Heart right ventricle (tissue), 16 donors: ENCODE measurements at regions of chr19 and their contacts with region 1.

Region 1: DNA sequence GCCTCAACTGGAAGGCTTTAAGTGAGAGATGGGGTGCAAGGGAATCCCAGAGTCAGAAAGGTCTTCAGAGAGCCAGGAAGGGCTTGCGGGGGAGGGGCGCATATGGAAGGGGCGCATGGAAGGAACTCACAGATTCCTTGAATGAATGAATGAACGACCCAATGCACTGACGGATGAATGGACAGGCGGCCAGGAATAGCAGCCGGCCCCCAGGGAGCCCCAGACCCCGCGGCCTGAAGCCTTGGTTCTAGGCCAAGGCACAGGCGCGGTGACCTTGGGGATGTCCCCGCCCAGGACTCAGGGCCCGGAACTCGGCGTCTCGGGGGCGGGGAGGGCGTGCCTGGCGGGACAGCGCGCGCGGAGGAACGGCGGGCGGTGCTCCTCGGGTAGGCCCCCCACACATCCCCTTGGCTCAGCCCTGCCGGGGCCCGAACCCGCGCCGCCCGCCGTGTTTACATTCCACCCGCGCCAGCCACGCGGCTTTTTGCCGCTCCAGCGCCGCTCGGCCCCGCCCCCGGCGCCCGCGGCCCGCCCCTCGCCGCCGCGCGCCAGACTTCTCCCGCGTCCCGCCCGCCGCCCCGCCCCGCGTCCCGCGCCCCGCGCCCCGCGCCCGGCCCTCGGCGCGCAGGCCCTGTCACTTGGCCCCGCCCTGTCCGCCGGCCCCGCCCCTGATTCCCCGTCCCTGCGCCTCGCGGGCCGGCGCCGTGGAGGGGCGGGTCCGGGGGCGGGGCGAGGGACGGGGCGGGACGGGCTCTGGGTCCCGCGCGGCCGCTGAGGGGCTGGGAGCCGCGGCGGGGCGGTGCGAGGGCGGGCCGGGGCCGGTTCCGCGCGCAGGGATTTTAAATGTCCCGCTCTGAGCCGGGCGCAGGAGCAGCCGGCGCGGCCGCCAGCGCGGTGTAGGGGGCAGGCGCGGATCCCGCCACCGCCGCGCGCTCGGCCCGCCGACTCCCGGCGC is at the start of gene CCNE1:
- DNase-seq: peak; percentile 95 to 97
- ATAC-seq: peak; percentile 96 to 99 (median 98)
- H3K4me3 ChIP-seq: peak within 1 kb of the TSS; percentile 35 to 66 (median 58)
- H3K27ac ChIP-seq: peak within 1 kb of the TSS in 8 of 10 donors; percentile 35 to 77 (median 75)
- H3K4me1 ChIP-seq: peaks cover 0 to 15% (median 8%) of the 10 kb centered on the region in 9 donors
- H3K27me3 ChIP-seq: no peaks in the 10 kb centered on the region
- CTCF ChIP-seq: no peak
- total RNA-seq, gene CCNE1: 1.4 to 4.0 (median 2.7) TPM

Region 2: DNA sequence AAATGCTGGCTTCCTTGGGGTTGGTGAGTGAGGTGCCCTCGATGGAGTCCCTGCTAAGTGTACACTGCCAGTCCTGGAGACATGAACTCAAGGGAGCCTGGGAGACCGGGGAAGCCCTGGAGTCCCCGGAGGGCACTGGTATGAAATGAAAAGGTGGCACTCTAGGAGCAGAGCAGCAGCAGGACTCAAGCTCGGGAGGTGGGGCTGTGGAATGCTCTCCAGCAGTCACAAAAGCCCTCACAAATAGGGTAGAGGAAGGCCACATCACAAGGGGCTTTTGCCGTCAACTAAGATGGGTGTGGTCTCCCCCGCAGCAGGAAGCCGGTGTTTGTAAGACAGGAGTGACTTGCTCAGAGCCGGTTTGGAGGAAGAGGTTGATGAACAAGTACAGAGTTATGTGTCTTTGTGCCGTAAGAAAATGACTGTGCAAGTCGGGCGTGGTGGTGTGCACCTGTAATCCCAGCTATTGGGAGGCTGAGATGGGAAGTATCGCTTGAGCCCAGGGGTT is 19.7 kb after region 1 on chr19:
- intact Hi-C with region 1: no loop called
- DNase-seq: no peak
- ATAC-seq: no peak
- H3K4me3 ChIP-seq: no peak overlapping the region
- H3K27ac ChIP-seq: peak overlapping the region in 1 of 10 donors; percentile 34
- H3K4me1 ChIP-seq: no peaks in the 10 kb centered on the region
- H3K27me3 ChIP-seq: peaks cover 0 to 25% (median 11%) of the 10 kb centered on the region in 7 donors
- CTCF ChIP-seq: no peak

Region 3: GRCh38 chr19:29844891-29845572 is 33.6 kb after region 1 on chr19:
- intact Hi-C with region 1: loop called in 6 of 10 experiments (anchors 2 to 5 kb)
- DNase-seq: peak; percentile 91 to 95
- ATAC-seq: peak; percentile 92 to 97 (median 94)
- H3K4me3 ChIP-seq: peak overlapping the region; percentile 49 to 94 (median 70)
- H3K27ac ChIP-seq: peak overlapping the region; percentile 2 to 86 (median 70)
- H3K4me1 ChIP-seq: peaks cover 2 to 27% (median 24%) of the 10 kb centered on the region in 9 donors
- H3K27me3 ChIP-seq: peaks cover 0 to 6% (median 0%) of the 10 kb centered on the region in 7 donors
- CTCF ChIP-seq: peak in 1 of 9 donors; percentile 9

Region 4: GRCh38 chr19:29887442-29887855 is 76.0 kb after region 1 on chr19:
- intact Hi-C with region 1: no loop called
- DNase-seq: no peak
- ATAC-seq: peak in 7 of 8 donors; percentile 64 to 87 (median 73)
- H3K4me3 ChIP-seq: no peak overlapping the region
- H3K27ac ChIP-seq: no peak overlapping the region
- H3K4me1 ChIP-seq: peaks cover 0 to 9% (median 3%) of the 10 kb centered on the region in 9 donors
- H3K27me3 ChIP-seq: peaks cover 0 to 19% (median 0%) of the 10 kb centered on the region in 7 donors
- CTCF ChIP-seq: peak in 2 of 9 donors; percentile 26 to 28

Region 5: DNA sequence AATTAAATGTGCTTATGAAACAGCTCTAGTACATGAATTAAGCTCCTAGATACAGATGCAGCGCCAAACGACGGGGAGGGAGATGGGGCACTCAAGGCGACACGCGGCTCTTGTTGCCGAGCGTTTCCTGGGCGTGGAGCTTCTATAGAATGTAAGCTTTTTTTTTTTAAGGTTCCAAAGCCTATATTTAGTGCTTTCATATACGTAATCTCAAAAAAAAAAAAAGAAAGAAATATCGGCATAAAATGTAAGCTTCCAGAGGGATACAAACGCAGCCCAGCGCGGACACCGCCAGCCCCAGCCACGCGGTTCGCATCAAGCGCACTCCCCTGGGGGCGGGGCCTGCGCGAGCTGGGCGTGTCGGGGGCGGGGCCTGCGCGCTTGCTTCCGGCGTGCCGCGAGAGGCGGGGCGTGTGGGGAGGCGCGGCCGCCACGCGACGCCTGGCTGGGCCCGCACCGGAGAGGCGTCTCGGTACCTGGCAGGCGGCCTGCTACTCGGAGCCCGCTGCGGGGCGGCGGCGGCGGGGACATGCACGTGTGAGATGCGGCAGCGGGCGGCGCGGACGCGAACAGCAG is 130.5 kb after region 1 on chr19 and contains the start of gene URI1:
- intact Hi-C with region 1: loop called in 1 of 10 experiments (anchors 10 kb)
- DNase-seq: peak; percentile 91 to 95
- ATAC-seq: peak; percentile 97 to 99 (median 99)
- H3K4me3 ChIP-seq: peak within 1 kb of the TSS; percentile 42 to 94 (median 88)
- H3K27ac ChIP-seq: peak within 1 kb of the TSS; percentile 26 to 86 (median 80)
- H3K4me1 ChIP-seq: peaks cover 0 to 39% (median 31%) of the 10 kb centered on the region in 9 donors
- H3K27me3 ChIP-seq: no peaks in the 10 kb centered on the region
- CTCF ChIP-seq: peak in 1 of 9 donors; percentile 9
- total RNA-seq, gene URI1: 39.6 to 47.7 (median 42.8) TPM